ENCODE measurements at regions of chr11 and their contacts with region 1.

Region 1: DNA sequence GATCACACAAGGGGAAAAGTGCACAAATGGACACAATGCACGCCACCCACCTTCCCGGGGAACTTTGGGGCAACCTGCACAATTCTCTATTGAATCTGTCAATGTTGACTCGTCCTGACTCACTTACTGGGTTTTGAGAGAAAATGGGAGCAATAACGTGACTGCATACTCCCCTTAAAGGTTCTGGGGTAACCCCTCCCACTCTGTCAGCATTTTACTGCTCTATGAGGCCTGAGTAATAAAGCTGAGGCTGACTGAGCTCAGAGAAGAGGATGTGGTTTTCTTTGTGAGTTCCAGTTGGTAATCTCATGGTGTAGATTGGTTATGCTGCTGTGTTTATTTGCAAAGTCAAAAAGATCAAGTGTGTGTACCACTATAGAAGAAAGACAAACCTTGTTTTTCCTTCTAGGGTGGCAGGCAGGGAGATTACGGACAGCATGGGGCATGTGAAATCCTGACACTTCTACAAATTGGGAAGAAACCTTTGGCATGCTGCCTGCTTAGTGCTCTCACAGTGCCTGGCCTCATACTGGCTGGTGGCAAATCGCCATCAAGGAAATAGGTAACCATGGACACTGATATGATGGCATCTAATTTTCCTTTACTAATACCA is 16.1 kb upstream of the APOA1 start:
- DNase-seq: peak; percentile 70
- H3K4me3 Mint-ChIP-seq: peak overlapping the region; percentile 73
- H3K27ac Mint-ChIP-seq: peak overlapping the region; percentile 92
- H3K4me1 Mint-ChIP-seq: peaks cover 64% of the 10 kb centered on the region
- H3K27me3 Mint-ChIP-seq: no peaks in the 10 kb centered on the region

Region 2: DNA sequence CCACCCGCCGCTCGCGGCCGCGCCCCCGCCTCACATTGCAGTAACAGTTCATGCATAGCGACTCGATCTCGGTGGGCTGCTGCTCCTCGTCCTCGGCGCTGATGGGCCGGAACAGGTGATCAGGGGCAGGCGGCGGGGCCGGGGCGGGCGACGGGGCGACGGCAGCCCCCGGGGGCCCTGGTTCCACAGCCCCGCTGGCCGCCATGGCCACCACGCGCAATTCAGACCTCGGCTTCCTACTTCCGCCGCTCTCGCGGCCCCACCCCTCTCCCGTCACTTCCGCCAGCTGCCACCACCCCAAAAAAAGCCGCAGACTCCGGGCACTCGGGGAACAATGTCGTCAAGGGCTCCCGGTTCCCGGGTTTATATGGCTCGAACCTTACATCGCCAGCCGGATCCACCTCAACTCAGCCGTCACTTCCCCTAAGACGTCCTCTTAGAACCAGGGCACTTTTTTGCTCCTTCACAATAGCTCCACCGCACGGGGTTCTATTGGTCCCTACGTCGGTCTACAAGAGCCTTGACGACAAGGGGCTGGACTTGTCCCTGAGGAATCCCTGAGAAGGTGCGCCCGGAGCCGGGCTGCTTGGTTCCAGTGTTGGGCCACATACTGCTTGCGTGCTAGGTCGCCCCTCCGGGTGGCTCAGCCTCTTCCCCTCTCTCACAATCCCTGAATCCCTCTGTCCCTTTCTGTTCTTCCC is 65.6 kb before region 1 on chr11 and contains the start of gene ZPR1:
- intact Hi-C with region 1: loop called (anchors 1 kb)
- DNase-seq: peak; percentile 84
- H3K4me3 Mint-ChIP-seq: peak within 1 kb of the TSS; percentile 90
- H3K27ac Mint-ChIP-seq: peak within 1 kb of the TSS; percentile 88
- H3K4me1 Mint-ChIP-seq: peaks cover 50% of the 10 kb centered on the region
- H3K27me3 Mint-ChIP-seq: no peaks in the 10 kb centered on the region
- total RNA-seq, gene ZPR1: 104 TPM in 2 replicates

Region 3: GRCh38 chr11:116927163-116927974 is 73.8 kb after region 1 on chr11:
- intact Hi-C with region 1: loop called (anchors 1 kb)
- DNase-seq: peak; percentile 5
- H3K4me3 Mint-ChIP-seq: peak overlapping the region; percentile 8
- H3K27ac Mint-ChIP-seq: peak overlapping the region; percentile 67
- H3K4me1 Mint-ChIP-seq: peaks cover 74% of the 10 kb centered on the region
- H3K27me3 Mint-ChIP-seq: no peaks in the 10 kb centered on the region

Region 4: DNA sequence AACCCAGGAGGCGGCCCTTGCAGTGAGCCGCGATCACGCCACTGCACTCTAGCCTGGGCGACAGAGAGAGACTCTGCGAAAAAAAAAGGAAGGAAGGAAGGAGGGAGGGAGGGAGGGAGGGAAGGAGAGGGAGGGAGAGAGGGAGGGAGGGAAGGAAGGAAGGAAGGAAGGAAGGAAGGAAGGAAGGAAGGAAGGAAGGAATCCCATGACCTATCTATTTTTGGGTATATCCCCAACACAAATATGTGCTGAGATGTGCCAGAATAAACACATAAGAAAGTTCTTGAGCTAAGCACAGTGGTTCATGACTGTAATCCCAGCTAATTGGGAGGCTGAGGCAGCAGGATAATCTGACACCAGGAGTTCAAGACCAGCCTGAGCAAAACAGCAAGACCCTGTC is 162.7 kb after region 1 on chr11:
- intact Hi-C with region 1: no loop called
- DNase-seq: no peak
- H3K4me3 Mint-ChIP-seq: no peak overlapping the region
- H3K27ac Mint-ChIP-seq: no peak overlapping the region
- H3K4me1 Mint-ChIP-seq: peaks cover 38% of the 10 kb centered on the region
- H3K27me3 Mint-ChIP-seq: no peaks in the 10 kb centered on the region

Region 5: DNA sequence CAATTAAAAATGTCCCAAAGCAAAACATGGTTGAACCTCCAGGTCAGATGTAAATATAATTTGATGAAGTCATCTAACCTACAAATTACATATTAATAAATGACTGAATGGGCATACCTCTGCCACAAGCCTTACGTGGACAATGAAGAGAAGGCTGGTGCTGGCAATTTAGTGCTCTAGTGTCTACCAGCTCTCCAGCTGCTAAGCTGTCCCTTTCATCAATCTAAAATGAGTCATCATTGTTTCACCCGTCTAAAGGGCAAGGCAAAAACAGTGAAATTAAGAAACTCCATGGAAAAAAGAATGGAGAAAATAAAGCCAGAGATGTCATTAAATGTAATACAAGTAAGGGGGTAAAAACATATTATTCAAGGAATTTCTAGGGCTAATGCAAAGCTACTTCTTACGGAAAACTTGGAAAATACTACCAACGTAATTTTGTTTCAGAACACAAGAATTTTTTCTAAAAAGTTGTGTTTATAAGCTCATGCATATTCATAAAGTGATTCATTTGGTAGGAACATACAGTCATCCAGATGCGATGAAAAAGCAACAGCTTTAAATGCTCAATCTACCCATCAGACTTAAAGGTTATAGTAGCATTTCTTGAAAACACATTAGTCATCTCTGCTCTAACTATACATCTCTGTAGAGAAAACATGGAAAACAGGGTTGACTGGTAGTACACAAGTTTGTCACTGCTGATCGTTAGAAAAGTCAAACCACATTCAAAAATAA is 173.2 kb after region 1 on chr11:
- intact Hi-C with region 1: loop called (anchors 1 kb)
- DNase-seq: no peak
- H3K4me3 Mint-ChIP-seq: peak overlapping the region; percentile 38
- H3K27ac Mint-ChIP-seq: peak overlapping the region; percentile 90
- H3K4me1 Mint-ChIP-seq: peaks cover 63% of the 10 kb centered on the region
- H3K27me3 Mint-ChIP-seq: no peaks in the 10 kb centered on the region

Region 6: DNA sequence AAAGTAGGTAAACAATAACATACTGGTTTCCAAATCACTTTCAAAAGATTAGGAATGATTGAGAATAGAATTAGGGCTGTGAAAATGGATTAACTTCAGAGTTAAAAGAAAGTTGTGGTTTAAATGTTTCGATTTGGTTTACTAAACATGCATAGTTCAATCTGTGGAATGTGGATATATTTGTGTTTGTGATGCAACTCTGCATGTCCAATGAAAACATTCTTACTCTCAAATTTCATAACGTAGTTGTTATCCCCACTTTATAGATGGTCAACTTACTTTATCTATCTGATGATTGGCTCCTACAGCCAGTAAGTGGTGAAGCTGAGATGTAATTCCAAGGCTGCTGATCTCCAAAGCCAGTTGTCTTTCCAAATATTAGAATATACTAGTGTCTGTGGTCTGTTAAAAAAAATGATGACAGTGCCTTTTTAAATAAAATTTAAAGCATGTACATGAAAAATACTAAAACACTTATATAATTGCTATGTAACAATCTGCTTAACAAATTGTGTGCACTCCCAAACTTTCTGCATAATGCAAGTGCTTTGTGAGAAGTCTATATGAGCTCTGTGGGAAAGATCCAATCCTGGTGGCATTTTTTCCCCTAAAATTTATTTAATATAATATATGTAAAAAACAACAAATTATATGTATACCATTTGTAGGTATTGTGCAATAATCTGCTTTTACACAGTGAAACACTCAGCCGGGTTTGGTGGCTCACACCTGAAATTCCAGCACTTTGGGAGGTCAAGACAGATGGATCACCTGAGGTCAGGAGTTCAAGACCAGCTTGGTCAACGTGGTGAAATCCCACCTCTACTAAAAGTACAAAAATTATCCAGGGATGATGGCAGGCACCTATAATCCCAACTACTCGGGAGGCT is 254.4 kb after region 1 on chr11:
- intact Hi-C with region 1: loop called (anchors 2 kb)
- DNase-seq: no peak
- H3K4me3 Mint-ChIP-seq: no peak overlapping the region
- H3K27ac Mint-ChIP-seq: no peak overlapping the region
- H3K4me1 Mint-ChIP-seq: no peaks in the 10 kb centered on the region
- H3K27me3 Mint-ChIP-seq: peaks cover 2% of the 10 kb centered on the region

Region 7: GRCh38 chr11:117232092-117232878 is 378.7 kb after region 1 on chr11 and contains the start of gene RNF214:
- intact Hi-C with region 1: loop called (anchors 1 kb)
- DNase-seq: peak; percentile 73
- H3K4me3 Mint-ChIP-seq: peak within 1 kb of the TSS; percentile 99
- H3K27ac Mint-ChIP-seq: peak within 1 kb of the TSS; percentile 100
- H3K4me1 Mint-ChIP-seq: peaks cover 44% of the 10 kb centered on the region
- H3K27me3 Mint-ChIP-seq: no peaks in the 10 kb centered on the region
- total RNA-seq, gene RNF214: 18.5 and 26.3 TPM in 2 replicates

Measured in activated T-helper 1 cell treated with anti-CD3 and anti-CD28 coated beads, Interleukin-12 subunit alpha, Interleukin-12 subunit beta, Interleukin-2, Interleukin-4 antibody, amounts not matched to agents 30 ng/mL and 10 ng/mL and 1 ng/mL, durations not matched to agents 14 hours and 24 hours and 36 hours (primary cell).